HepG2 (cell line): ENCODE measurements at regions of chr1 and their contacts with region 1.

Region 1: DNA sequence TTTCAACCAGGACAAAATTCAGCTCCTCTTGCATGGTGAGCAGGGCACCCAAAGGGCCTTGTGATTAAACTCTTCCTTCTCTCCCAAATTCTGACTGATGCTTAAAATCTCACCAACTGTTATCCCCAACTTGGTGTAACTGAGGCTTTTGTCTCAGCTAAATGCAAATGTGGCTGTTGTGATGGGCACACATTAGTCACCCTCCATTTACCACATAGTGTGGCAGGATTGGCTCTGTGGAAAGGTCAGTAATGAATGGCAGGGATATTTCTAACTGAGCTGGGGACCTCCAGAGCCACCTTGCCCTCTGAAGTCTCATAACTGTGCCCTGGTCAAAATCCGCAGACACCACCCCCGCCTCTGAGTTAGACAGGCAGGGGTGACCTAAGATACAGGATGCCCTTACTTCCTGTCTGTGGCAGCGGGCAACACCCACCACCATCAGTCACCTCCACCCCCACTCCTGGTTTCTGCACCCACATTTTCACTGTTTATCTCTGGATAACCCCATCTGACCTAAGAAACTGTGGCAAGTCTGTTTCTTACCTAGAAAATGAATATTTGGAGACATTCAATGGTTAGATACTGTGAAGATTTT is 25.4 kb upstream of the RGS16 start:
- DNase-seq: no peak
- ATAC-seq: no peak
- H3K4me3 ChIP-seq: no peak overlapping the region
- H3K27ac ChIP-seq: no peak overlapping the region
- H3K4me1 ChIP-seq: no peaks in the 10 kb centered on the region
- H3K27me3 ChIP-seq: peaks cover 0 to under 1% of the 10 kb centered on the region in 2 experiments; a peak in 1 of 5 replicates
- CTCF ChIP-seq: no peak
- EP300 ChIP-seq: no peak
- POLR2A ChIP-seq: no peak
- RAD21 ChIP-seq: no peak

Region 2: DNA sequence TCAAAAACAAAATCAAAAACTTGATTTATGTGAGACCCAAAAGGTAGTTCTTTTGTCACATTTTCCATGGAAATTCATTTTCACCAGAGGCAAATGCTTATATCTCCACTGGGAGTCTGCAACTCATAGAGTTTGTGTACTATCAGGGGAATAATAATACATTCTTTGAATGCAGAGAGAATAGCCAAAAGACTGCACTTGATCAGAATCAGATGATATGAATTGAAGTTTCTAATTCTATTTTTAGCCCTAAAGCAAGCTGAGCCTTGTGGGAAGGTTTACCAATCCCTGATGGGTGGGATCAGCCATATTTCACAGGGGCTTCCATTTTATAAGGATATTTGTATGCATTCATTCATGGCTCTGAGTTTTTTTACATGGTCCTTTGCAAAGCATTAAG is 1471.5 kb after region 1 on chr1:
- CTCF ChIA-PET with region 1: no interaction called
- POLR2A ChIA-PET with region 1: no interaction called
- in situ Hi-C with region 1: no loop called
- intact Hi-C with region 1: loop called (anchors 10 kb)
- DNase-seq: no peak
- ATAC-seq: no peak
- H3K4me3 ChIP-seq: no peak overlapping the region
- H3K27ac ChIP-seq: no peak overlapping the region
- H3K4me1 ChIP-seq: no peaks in the 10 kb centered on the region
- H3K27me3 ChIP-seq: no peaks in the 10 kb centered on the region; a peak in 1 of 5 replicates
- CTCF ChIP-seq: no peak
- EP300 ChIP-seq: no peak
- POLR2A ChIP-seq: no peak
- RAD21 ChIP-seq: no peak